ENCODE measurements at regions of chr2 and their contacts with region 1.

Region 1: DNA sequence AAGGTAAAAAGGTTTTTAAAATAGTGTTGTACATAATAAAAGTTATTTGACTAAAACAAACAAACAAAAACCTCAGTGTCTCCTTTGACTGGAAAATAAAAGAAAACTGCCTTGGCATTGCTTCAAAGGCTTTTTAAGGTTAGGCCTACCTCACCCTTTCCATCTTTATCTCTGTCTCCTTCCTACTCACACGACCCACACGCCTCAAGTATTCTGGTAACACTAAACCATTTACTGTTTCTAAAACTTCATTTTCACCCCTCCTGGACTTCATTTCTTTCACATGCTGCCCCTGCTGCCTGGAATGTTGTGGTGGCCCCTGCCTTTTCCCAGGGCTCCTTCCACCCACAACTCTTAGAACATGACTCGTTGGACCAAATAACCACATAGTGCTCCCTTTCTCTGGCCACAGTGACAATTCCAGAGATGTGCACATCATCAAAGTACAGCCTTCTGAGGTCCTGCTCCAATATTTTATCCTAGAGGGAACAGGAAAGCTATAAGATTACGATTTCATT is 54.0 kb downstream of the ERBB4 start:
- DNase-seq: no peak
- H3K4me3 ChIP-seq: no peak overlapping the region
- H3K27ac ChIP-seq: no peak overlapping the region
- H3K4me1 ChIP-seq: no peaks in the 10 kb centered on the region
- H3K27me3 ChIP-seq: no peaks in the 10 kb centered on the region
- CTCF ChIP-seq: no peak
- POLR2A ChIP-seq: no peak

Region 2: DNA sequence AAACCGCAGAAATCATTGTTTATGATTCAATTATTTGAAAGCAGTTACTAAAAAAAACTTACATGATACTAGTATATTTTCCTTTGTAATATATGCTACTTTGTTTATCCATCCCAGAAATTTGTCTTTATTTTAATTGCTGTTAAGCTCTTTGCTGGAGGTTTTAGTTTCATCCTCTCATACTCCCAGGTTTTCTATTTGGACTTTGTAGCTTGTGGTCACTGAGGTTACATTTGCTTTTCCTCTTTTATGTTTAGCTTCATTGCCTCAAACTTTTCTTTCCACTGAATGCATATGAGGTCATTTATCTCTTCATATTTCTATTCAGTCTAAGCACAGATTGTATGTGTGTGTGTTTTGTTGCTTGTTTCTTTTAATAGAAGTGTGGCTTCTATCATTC is 35.9 kb before region 1 on chr2:
- CTCF ChIA-PET with region 1: no interaction called
- POLR2A ChIA-PET with region 1: no interaction called
- dilution Hi-C with region 1: no loop called
- intact Hi-C with region 1: loop called (anchors 1 kb)
- DNase-seq: no peak
- H3K4me3 ChIP-seq: no peak overlapping the region
- H3K27ac ChIP-seq: no peak overlapping the region
- H3K4me1 ChIP-seq: no peaks in the 10 kb centered on the region
- H3K27me3 ChIP-seq: no peaks in the 10 kb centered on the region
- CTCF ChIP-seq: no peak
- POLR2A ChIP-seq: no peak

Region 3: DNA sequence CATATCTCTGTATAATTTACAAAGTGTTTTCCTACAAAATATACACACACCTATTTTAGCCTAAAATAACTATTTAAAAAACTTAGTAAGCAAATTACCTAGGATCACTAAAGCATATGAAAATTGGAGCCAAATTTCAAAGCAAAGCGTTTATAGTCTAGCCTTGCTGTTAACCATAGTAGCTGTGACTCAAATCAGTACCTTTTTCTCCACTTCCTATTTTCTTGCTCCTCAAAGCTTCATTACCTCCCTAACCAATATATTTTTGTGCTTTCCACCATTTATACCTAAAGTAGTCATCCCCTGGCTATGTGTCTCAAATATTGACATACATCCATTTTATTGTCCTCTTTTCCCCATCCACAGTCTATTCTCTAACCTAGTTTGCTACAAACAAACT is 19.2 kb before region 1 on chr2:
- CTCF ChIA-PET with region 1: no interaction called
- POLR2A ChIA-PET with region 1: no interaction called
- dilution Hi-C with region 1: no loop called
- intact Hi-C with region 1: no loop called
- DNase-seq: no peak
- H3K4me3 ChIP-seq: no peak overlapping the region
- H3K27ac ChIP-seq: no peak overlapping the region
- H3K4me1 ChIP-seq: no peaks in the 10 kb centered on the region
- H3K27me3 ChIP-seq: no peaks in the 10 kb centered on the region
- CTCF ChIP-seq: no peak
- POLR2A ChIP-seq: no peak

Region 4: DNA sequence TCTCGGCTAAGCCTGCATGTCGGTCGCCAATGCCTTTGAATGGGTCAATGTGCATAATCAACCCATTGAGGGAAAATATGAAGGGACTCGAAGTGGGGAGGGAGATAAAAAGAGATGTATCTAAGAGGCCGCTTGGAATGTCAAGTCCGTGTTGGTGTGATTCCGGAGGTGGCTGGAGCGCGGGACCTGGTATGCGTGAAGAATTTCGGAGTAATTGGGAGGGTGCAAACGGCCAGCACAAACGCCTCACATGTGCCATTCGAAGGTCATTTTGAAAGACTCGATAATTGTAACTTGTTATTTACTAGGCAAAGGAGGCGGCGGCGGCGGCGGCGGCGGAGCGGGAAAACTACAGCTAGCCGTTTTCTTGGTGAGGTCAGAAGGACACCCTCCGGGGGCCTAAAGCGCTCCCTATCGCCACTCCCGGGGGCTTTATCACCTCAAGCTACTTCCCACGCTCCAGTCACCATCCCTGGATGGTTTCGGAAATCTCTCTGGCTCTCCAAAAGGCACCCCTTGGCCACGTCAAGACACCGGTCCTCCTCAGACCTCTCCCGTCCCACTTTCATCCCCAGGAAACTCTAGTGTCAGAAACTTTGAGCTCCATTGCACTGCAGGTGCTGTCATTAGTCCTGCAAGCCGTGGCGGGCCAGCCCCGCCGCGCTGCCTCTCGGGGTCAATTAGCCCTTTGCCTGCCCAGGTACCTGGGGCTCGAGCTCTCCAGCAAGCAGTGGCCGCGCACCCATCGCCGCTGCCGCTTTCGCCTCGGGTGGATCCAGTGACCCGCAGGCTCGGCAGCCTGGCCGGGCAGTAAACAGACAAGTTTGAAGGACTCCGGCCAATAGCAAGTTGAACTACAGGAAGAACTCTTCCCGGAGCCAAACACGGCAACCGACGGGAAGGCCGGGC is 52.4 kb after region 1 on chr2:
- CTCF ChIA-PET with region 1: no interaction called
- POLR2A ChIA-PET with region 1: no interaction called
- dilution Hi-C with region 1: no loop called
- intact Hi-C with region 1: no loop called
- DNase-seq: peak; percentile 20
- H3K4me3 ChIP-seq: peak overlapping the region; percentile 39 to 88 (median 86)
- H3K27ac ChIP-seq: no peak overlapping the region
- H3K4me1 ChIP-seq: peaks cover 18% of the 10 kb centered on the region
- H3K27me3 ChIP-seq: peaks cover 14 to 31% of the 10 kb centered on the region in 2 experiments
- CTCF ChIP-seq: no peak
- POLR2A ChIP-seq: no peak

Measured in endothelial cell of umbilical vein (primary cell).